Right ventricle myocardium inferior (tissue), 1 donor: ENCODE measurements at regions of chr18 and their contacts with region 1.

Region 1: GRCh38 chr18:36129300-36130038 is at the starts of genes ELP2 and SLC39A6:
- DNase-seq: peak; percentile 99
- ATAC-seq: peak; percentile 98
- total RNA-seq, gene ELP2: 48.1 TPM
- total RNA-seq, gene SLC39A6: 12.8 TPM

Region 2: GRCh38 chr18:35564795-35565453 is 564.5 kb before region 1 on chr18:
- intact Hi-C with region 1: no loop called
- DNase-seq: no peak
- ATAC-seq: no peak

Region 3: DNA sequence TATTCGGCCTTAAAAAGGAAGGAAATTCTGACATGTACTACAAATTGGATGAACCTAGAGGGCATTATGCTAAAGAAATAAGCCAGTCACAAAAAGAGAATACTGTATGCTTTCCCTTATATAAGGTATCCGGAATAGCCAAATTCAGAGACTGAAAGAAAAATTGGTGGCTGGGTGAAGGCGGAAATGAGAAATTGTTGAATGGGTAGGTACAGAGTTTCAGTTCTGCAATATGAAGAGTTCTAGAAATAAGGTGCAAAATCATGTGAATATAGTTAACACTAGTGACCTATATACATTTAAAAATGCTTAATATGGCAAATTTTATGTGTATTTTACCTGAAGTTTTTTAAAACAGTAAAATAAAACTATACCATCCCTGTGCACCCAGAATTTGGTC is 113.8 kb before region 1 on chr18:
- intact Hi-C with region 1: loop called (anchors 10 kb)
- DNase-seq: no peak
- ATAC-seq: no peak

Region 4: GRCh38 chr18:36067055-36067957 is 62.2 kb before region 1 on chr18 and contains the start of gene RPRD1A:
- intact Hi-C with region 1: loop called (anchors 5 kb)
- DNase-seq: peak; percentile 99
- ATAC-seq: peak; percentile 96
- total RNA-seq, gene RPRD1A: 45.5 TPM